ENCODE measurements at regions of chr17 and their contacts with region 1.

Region 1: GRCh38 chr17:4143563-4144421 is 795 bp downstream of the CYB5D2 start:
- DNase-seq: peak; percentile 91
- H3K4me3 Mint-ChIP-seq: peak overlapping the region; percentile 99
- H3K27ac Mint-ChIP-seq: peak overlapping the region; percentile 100
- H3K4me1 Mint-ChIP-seq: peaks cover 42% of the 10 kb centered on the region
- H3K27me3 Mint-ChIP-seq: no peaks in the 10 kb centered on the region

Region 2: GRCh38 chr17:3845621-3846441 is 298.0 kb before region 1 on chr17 and contains the start of gene NCBP3:
- CTCF ChIA-PET with region 1: no interaction called
- intact Hi-C with region 1: loop called (anchors 1 kb)
- DNase-seq: peak; percentile 91
- H3K4me3 Mint-ChIP-seq: peak within 1 kb of the TSS; percentile 94
- H3K27ac Mint-ChIP-seq: peak within 1 kb of the TSS; percentile 90
- H3K4me1 Mint-ChIP-seq: peaks cover 22% of the 10 kb centered on the region
- H3K27me3 Mint-ChIP-seq: no peaks in the 10 kb centered on the region
- total RNA-seq, gene NCBP3: 33.9 to 40.4 TPM

Region 3: DNA sequence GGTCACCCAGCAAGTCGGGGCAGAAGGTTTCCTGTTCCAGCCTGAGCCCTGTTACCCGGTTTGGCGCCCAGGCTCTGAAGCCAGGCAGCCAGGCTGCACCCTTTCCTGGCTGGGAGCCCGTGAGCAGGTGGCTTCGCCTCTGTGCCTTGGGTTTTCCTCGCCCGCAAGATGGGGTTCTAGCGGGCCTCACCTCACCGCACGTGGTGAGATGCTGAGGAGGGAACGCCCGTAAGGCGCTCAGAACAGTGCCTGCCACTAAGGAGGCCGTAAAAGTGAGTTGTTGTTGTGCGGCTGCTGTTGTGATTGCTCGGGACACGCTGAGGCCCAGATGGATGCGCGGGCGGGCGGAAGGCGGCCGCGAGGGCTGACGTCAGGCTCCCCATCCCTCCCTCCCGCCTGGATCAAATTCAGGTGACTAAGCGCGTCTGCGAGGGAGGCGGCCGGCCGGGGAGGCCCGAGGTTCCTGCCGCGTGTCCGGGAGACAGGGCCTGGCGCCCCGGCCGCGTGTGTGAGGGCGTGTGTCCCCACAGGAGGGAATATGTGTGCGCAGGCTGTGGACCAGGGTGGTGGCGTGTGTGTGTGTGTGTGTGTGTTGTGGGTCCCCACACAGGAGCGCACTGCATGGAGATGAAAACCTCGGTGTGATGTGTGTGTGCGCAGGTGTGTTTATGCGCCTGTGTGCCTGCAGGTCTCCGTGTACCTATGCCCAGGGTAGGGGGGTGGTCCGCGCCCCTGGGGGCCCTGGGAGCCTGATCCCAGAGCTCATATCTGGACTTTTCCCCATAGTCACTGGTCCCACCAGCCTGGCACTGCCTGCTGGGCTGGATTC is 255.2 kb before region 1 on chr17:
- CTCF ChIA-PET with region 1: no interaction called
- intact Hi-C with region 1: no loop called
- DNase-seq: no peak
- H3K4me3 Mint-ChIP-seq: no peak overlapping the region
- H3K27ac Mint-ChIP-seq: no peak overlapping the region
- H3K4me1 Mint-ChIP-seq: peaks cover 46% of the 10 kb centered on the region
- H3K27me3 Mint-ChIP-seq: no peaks in the 10 kb centered on the region

Region 4: DNA sequence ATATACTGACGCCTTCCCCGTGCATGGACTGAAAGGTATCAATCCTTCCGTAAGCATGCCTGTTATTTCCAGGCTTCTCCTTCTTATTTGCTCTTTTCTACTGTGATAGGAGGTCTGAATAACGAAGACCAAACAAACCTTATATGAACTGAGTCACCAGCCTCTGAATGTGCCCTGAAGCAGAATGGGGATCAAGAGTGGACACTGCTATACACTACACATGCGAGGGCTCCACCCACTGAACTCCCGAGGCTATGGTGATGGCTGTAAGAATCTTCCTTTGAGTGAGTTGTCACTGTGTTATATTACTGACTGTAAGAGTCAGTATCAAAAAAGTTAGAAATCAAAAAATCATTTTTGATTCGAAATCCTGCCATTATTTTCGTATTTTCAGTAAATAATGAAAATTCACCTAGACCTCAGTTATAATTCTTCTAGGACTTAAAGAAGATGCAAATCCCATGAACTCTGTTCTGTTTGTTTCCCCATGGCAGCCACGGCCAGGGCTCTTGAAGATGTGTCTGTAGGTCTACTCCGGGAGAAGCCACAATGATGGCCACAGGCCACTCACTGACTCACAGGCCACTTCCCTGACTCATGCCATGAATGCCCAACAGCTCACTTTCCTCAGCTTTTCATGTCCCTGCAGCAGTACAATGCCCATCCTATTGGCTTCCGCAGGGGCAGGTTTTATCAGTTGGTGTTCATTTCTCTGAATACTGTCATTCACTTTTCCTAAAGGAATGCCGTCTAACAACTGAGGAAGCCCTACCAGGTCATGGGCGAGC is 55.7 kb before region 1 on chr17:
- CTCF ChIA-PET with region 1: no interaction called
- intact Hi-C with region 1: loop called (anchors 2 kb)
- DNase-seq: no peak
- H3K4me3 Mint-ChIP-seq: no peak overlapping the region
- H3K27ac Mint-ChIP-seq: no peak overlapping the region
- H3K4me1 Mint-ChIP-seq: peaks cover 13% of the 10 kb centered on the region
- H3K27me3 Mint-ChIP-seq: no peaks in the 10 kb centered on the region

Region 5: GRCh38 chr17:4366327-4367063 is 222.7 kb after region 1 on chr17 and contains the start of gene UBE2G1:
- CTCF ChIA-PET with region 1: no interaction called
- intact Hi-C with region 1: loop called (anchors 1 kb)
- DNase-seq: peak; percentile 99
- H3K4me3 Mint-ChIP-seq: peak within 1 kb of the TSS; percentile 71
- H3K27ac Mint-ChIP-seq: peak within 1 kb of the TSS; percentile 81
- H3K4me1 Mint-ChIP-seq: peaks cover 31% of the 10 kb centered on the region
- H3K27me3 Mint-ChIP-seq: no peaks in the 10 kb centered on the region
- total RNA-seq, gene UBE2G1: 33.3 to 36.1 TPM

Region 6: DNA sequence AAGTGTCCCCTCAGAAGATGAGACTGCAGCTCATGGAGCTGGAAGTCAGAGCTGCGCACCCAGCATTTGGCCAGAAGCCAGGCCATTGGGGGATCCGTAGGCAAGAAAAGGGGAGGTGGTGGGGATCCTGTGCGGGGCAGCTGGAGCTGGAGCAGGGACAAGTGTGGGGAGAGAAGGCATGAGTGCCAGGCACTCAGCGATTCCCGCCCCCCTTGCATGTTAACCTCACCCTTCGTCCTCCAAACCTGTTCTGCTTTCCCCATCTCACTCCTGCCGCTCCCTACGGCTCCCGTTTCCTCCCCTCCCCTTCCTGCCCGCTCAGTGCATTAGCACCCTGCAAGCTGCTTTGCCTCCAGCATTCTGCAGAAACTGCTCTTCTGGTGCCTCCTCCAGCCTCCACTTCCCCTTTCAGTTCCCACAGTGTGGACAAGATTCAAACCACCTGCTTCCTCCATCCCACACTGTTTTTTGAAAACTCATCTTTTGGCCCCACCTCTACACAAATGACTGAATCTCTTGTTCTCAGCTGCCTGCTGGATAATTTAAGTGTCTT is 492.1 kb after region 1 on chr17:
- CTCF ChIA-PET with region 1: no interaction called
- intact Hi-C with region 1: no loop called
- DNase-seq: no peak
- H3K4me3 Mint-ChIP-seq: no peak overlapping the region
- H3K27ac Mint-ChIP-seq: no peak overlapping the region
- H3K4me1 Mint-ChIP-seq: peaks cover 18% of the 10 kb centered on the region
- H3K27me3 Mint-ChIP-seq: peaks cover 47% of the 10 kb centered on the region

Region 7: GRCh38 chr17:4833178-4833940 is 689.6 kb after region 1 on chr17 and contains the start of gene MINK1:
- CTCF ChIA-PET with region 1: no interaction called
- intact Hi-C with region 1: loop called (anchors 1 kb)
- DNase-seq: peak; percentile 82
- H3K4me3 Mint-ChIP-seq: peak within 1 kb of the TSS; percentile 85
- H3K27ac Mint-ChIP-seq: peak within 1 kb of the TSS; percentile 83
- H3K4me1 Mint-ChIP-seq: peaks cover 27% of the 10 kb centered on the region
- H3K27me3 Mint-ChIP-seq: no peaks in the 10 kb centered on the region
- total RNA-seq, gene MINK1: 49.1 to 50.4 TPM